ENCODE measurements at regions of chr22 and their contacts with region 1.

Region 1: GRCh38 chr22:46087336-46088277 is 62.7 kb upstream of the PPARA start:
- DNase-seq: peak; percentile 93 to 100 (median 98)

Region 2: DNA sequence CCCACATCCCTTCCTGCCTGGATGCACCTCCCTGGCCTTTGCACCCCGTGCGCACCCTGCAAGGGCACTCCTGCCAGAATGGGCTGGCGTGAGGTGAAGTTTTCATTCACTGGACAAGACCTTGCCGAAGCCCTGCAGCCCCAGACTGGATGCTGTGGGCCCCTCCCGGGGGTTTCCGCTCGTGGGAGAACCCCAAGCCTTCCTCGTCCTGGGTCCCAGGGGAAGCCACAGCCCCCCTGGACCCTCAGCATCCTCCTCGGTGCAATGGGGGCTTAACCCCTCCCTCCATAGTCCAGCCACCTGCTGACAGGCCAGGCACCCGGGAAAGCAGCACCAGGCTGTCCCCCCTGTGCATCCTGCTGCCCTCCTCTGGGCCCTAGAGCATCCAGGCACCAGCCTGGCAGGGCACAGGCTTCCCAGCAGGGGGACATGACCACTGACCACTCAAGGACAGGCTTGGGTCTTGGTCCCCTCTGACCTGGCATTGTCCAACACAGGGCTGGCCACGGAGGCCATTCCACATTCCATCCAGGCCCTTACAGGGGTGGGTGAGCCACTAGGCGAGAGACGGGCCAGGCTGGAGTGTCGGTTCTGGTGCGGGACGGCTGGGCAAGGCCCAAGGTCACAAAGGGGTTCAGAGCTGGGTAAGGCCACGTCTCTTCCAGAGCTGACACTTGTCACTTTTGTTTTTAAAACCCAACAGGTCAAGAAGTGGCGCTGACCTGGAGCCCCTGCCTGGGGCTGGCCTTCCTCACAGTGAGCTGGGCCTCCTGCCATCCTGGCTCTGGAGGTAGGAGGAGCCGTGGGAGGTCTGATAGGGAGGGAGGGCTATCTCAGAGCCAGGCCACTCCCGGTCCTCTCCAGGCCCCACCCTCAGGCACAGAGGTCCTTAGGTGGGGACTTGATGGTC is 21.2 kb after region 1 on chr22:
- intact Hi-C with region 1: loop called (anchors 2 kb)
- DNase-seq: no peak